Activated CD8-positive, alpha-beta memory T cell treated with anti-CD3 and anti-CD28 coated beads, Interleukin-2, amount 10 ng/mL, durations not matched to agents 7 days and 5 days (primary cell): ENCODE measurements at regions of chr5 and their contacts with region 1.

Region 1: DNA sequence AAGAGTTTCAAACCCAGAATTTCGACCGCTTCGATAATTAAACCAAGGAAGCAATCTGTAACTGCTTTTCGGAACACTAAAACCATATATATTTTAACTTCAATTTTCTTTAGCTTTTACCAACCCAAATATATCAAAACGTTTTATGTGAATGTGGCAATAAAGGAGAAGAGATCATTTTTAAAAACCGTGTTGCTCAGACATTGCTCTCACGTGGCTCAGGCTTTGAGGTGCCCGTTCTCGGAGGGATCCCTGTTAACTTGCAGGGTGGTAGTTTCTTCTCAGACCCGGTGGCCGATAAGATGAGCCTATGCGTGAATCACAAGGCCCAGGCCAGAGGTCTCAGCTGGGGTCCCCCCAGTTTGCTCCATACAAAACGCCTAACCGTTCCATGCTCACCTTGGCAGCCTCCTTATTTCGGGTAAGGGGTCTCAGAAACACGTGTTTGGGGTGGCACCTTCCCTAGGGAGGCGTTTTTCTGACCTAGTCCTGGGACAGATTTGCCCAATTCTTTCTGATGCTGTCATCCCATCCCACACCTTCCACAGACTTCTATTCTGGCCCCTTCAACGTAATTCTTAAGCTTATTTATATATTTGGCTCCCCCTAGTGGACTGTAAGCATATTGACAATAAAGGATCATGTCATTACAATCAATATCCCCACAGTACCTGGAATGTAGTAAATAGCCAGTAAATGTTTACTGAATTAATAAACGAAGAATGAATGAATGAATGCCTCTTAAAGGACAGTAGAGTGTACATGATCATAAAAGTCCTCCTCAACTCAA is 48.1 kb downstream of the THBS4 start:
- DNase-seq: peak; percentile 48
- ATAC-seq: peak; percentile 84
- H3K4me3 Mint-ChIP-seq: peak overlapping the region; percentile 64
- H3K27ac Mint-ChIP-seq: peak overlapping the region; percentile 82
- H3K4me1 Mint-ChIP-seq: peaks cover 18% of the 10 kb centered on the region
- H3K27me3 Mint-ChIP-seq: no peaks in the 10 kb centered on the region

Region 2: DNA sequence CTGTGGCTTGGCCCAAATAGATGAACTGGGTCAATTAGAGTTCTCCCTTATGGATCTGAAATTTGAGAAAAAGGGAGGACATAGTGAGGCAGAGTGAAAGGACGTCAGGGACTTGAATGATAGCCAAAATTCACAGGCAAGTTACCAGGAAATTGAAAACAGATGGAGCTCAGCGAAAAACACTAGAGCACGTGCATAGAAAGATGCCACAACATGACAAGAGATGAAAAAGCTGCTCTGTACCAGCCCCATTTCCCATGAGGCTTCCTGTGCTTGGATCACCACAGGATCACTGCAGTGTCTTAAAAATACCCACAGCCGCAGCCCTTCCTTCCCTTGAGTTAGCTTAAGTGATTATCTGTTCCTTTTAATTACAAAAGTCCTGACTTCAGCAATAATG is 530.3 kb before region 1 on chr5:
- CTCF ChIA-PET with region 1: interaction called, 11 read pairs
- DNase-seq: no peak
- ATAC-seq: no peak
- H3K4me3 Mint-ChIP-seq: no peak overlapping the region
- H3K27ac Mint-ChIP-seq: no peak overlapping the region
- H3K4me1 Mint-ChIP-seq: peaks cover 29% of the 10 kb centered on the region
- H3K27me3 Mint-ChIP-seq: no peaks in the 10 kb centered on the region

Region 3: GRCh38 chr5:79857714-79858409 is 225.4 kb before region 1 on chr5:
- CTCF ChIA-PET with region 1: interaction called, 11 read pairs
- DNase-seq: peak; percentile 84
- ATAC-seq: peak; percentile 66
- H3K4me3 Mint-ChIP-seq: no peak overlapping the region
- H3K27ac Mint-ChIP-seq: no peak overlapping the region
- H3K4me1 Mint-ChIP-seq: peaks cover 3% of the 10 kb centered on the region
- H3K27me3 Mint-ChIP-seq: peaks cover 38% of the 10 kb centered on the region

Region 4: DNA sequence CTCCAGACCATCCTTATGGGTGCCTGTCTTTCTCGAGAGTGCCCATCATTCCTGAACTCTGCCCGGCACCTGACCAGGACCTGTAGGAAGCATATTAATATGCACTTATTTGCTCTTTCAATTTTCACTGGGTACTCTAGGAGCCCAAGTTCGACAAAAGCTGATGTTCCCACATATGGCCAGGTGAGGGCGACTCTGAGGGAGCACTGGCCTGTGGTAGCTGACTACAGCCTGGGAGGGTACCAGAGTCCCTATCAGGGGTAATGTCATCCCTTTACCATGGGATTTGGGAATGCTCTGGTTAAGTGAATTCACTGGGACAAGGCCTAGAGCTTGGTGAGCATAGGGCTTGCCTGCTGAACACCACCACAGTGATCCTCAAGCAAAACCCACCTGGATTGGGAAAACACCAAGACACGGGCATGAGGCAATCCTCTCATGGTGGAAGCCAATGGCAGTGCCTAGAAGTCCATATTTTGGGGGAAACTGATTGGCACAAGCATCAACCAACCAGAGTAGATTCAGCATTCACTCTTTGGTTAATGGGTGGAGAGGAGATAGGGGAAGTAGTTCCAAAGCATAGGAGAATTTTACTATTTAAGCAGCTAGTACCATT is 204.5 kb before region 1 on chr5:
- CTCF ChIA-PET with region 1: interaction called, 32 read pairs
- DNase-seq: peak; percentile 55
- ATAC-seq: peak; percentile 49
- H3K4me3 Mint-ChIP-seq: no peak overlapping the region
- H3K27ac Mint-ChIP-seq: no peak overlapping the region
- H3K4me1 Mint-ChIP-seq: peaks cover 2% of the 10 kb centered on the region
- H3K27me3 Mint-ChIP-seq: peaks cover 9% of the 10 kb centered on the region

Region 5: DNA sequence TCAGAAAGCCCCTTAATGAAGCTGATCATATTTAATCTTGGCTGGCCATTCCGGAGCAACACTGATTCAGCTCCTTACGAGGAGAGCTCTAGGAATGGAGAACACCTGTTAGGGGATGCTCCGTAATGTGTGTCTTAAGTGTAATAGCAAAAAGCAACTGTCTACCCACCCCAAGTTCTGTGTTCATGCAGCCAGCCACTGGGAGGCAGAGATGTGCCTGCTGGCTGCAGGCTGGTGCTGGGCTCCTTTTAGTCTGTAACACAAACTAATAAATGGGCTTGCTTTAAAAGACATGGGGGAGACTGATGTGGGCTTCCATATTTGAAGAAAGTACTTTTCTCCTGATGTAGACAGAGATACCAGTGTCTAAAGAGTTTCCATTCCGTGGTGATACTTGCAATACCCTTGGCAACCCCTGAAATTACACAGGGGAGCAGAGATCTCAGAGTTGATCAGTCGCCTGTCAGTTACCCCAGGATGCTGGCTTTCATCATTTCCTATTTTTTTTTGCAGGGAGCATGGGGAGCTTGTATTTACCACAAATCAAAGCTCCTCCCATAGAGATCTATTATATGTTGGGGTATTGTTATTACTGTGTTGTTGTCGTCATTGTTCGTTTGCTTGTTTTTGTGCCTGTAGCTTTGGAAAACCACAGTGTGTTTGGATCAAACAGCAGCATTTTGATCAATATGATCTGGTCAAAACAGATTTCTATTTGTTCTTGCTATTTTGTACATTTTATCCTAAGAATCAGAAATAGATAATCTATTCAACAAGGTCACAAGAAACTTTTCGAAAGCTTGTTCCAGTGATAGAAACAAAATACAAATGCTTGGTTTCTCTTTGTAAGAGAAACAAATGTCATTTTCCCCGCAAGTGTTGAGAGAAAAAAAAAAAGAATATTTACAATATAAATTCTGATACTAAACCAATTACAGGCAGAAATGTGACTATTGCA is 158.1 kb before region 1 on chr5:
- CTCF ChIA-PET with region 1: interaction called, 48 read pairs
- DNase-seq: peak; percentile 54
- ATAC-seq: peak; percentile 71
- H3K4me3 Mint-ChIP-seq: no peak overlapping the region
- H3K27ac Mint-ChIP-seq: no peak overlapping the region
- H3K4me1 Mint-ChIP-seq: peaks cover 26% of the 10 kb centered on the region
- H3K27me3 Mint-ChIP-seq: peaks cover 14% of the 10 kb centered on the region

Region 6: GRCh38 chr5:79990598-79991507 is 92.4 kb before region 1 on chr5 and contains the start of gene MTX3:
- CTCF ChIA-PET with region 1: interaction called, 15 read pairs
- DNase-seq: peak; percentile 96
- ATAC-seq: peak; percentile 80
- H3K4me3 Mint-ChIP-seq: peak within 1 kb of the TSS; percentile 96
- H3K27ac Mint-ChIP-seq: peak within 1 kb of the TSS; percentile 98
- H3K4me1 Mint-ChIP-seq: peaks cover 53% of the 10 kb centered on the region
- H3K27me3 Mint-ChIP-seq: no peaks in the 10 kb centered on the region
- total RNA-seq, gene MTX3: 31.4 to 39.8 TPM

Region 7: DNA sequence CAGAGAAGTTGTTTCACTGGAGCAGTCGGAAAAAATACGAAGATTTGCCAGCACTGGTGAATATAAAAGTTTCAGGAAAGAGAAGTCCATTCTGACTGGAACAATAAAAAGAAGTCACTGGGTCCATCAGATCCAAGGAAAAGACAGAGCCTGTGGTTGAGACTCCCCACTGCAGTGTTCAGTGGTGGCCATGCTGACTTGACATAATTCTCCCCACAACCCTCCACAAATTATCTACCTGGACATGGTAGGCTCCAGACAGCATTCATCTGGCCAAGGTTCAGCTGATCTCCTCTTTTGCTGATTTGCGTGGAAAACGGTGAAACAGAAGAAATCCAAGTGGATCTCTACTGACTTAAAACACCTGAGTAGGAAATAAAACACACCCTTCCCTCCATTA is 40.1 kb before region 1 on chr5:
- CTCF ChIA-PET with region 1: no interaction called
- DNase-seq: no peak
- ATAC-seq: no peak
- H3K4me3 Mint-ChIP-seq: no peak overlapping the region
- H3K27ac Mint-ChIP-seq: no peak overlapping the region
- H3K4me1 Mint-ChIP-seq: no peaks in the 10 kb centered on the region
- H3K27me3 Mint-ChIP-seq: peaks cover 26% of the 10 kb centered on the region

Region 8: DNA sequence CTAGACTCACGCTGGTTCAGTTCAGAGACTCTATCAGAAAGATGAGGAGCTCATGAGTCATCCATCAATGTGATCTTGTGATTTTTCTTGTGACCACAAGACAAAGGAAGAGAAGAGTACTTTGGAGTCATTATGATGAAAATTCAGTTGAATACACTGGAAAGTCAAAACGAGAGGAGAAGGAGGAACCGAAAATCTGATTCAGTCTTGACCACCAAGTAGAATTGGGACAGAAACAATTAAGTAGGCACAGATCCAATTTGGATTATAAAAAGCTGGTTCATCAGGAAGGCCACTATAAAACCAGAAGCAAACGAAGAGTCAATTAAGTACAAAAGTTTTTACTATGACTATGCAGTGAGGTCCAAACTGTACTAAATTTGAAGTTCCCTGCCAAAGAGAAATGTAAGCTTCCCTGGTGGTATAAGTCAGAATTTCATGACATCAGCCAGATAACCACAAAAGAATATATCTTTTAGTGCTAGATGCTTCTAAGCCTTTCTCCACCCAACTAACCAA is 42.7 kb after region 1 on chr5:
- CTCF ChIA-PET with region 1: no interaction called
- DNase-seq: peak; percentile 44
- ATAC-seq: peak; percentile 89
- H3K4me3 Mint-ChIP-seq: peak overlapping the region; percentile 37
- H3K27ac Mint-ChIP-seq: peak overlapping the region; percentile 77
- H3K4me1 Mint-ChIP-seq: peaks cover 32% of the 10 kb centered on the region
- H3K27me3 Mint-ChIP-seq: no peaks in the 10 kb centered on the region

Region 9: GRCh38 chr5:80308526-80308925 is 225.2 kb after region 1 on chr5:
- CTCF ChIA-PET with region 1: interaction called, 107 read pairs
- DNase-seq: no peak
- ATAC-seq: no peak
- H3K4me3 Mint-ChIP-seq: no peak overlapping the region
- H3K27ac Mint-ChIP-seq: no peak overlapping the region
- H3K4me1 Mint-ChIP-seq: no peaks in the 10 kb centered on the region
- H3K27me3 Mint-ChIP-seq: no peaks in the 10 kb centered on the region